ENCODE measurements at regions of chr14 and their contacts with region 1.

Region 1: GRCh38 chr14:96215452-96216244 is 11.0 kb downstream of the BDKRB2 start:
- DNase-seq: peak; percentile 68
- H3K4me3 Mint-ChIP-seq: no peak overlapping the region
- H3K27ac Mint-ChIP-seq: peak overlapping the region; percentile 19
- H3K4me1 Mint-ChIP-seq: peaks cover 19% of the 10 kb centered on the region
- H3K27me3 Mint-ChIP-seq: no peaks in the 10 kb centered on the region
- CTCF ChIP-seq: no peak

Region 2: GRCh38 chr14:96225745-96226151 is 10.1 kb after region 1 on chr14:
- CTCF ChIA-PET with region 1: interaction called, 3 read pairs
- POLR2A ChIA-PET with region 1: interaction called, 23 read pairs
- intact Hi-C with region 1: no loop called
- DNase-seq: peak; percentile 42
- H3K4me3 Mint-ChIP-seq: no peak overlapping the region
- H3K27ac Mint-ChIP-seq: no peak overlapping the region
- H3K4me1 Mint-ChIP-seq: peaks cover 26% of the 10 kb centered on the region
- H3K27me3 Mint-ChIP-seq: no peaks in the 10 kb centered on the region
- CTCF ChIP-seq: no peak

Region 3: GRCh38 chr14:96239759-96240158 is 24.1 kb after region 1 on chr14:
- CTCF ChIA-PET with region 1: no interaction called
- POLR2A ChIA-PET with region 1: no interaction called
- intact Hi-C with region 1: no loop called
- DNase-seq: no peak
- H3K4me3 Mint-ChIP-seq: no peak overlapping the region
- H3K27ac Mint-ChIP-seq: no peak overlapping the region
- H3K4me1 Mint-ChIP-seq: no peaks in the 10 kb centered on the region
- H3K27me3 Mint-ChIP-seq: no peaks in the 10 kb centered on the region
- CTCF ChIP-seq: no peak

Region 4: DNA sequence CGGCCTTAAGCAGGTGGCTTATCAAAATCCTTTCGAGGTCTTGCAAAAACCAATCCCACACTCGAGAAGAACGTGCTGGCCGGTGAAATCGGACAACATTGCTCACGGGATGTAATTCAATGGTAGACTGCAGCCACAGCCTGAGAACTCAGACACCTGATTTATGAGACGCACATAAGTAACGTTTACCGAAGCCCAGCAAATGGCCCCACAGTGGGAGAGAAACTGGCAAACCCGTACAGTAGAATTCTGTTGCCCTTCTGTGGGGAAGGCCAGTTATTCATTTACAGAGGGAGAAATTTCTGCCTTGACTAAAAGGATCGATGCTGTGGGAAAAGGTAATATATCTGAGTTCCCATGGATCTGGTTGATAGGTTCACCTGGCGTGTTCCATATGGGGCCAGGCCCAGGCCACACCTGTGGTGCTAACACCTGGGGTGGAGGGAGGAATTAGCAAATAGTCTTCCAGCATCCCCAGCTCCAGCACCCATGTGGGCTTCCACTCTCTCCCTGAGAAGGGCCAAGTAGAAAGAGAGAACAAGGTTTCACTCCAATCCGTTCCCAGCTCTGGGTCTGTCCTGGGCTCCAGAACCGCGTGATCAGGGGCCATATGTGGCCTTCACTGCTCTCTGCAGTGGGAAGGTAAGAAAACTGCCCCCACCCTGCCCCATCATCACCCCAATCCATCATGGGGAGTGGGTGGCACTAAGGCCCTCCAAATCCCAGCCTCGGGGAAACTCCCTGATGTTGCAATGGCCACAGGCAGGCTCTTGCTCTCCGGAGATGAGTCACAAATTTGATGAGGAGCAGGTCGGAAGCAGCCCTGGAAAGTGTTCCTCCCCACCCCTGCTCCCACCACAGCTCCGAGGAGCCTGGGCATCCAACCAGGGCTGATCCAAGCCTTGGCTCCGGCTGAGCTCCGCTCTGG is 53.0 kb after region 1 on chr14:
- CTCF ChIA-PET with region 1: interaction called, 4 read pairs
- POLR2A ChIA-PET with region 1: interaction called, 10 read pairs
- intact Hi-C with region 1: no loop called
- DNase-seq: peak; percentile 98
- H3K4me3 Mint-ChIP-seq: peak overlapping the region; percentile 43
- H3K27ac Mint-ChIP-seq: peak overlapping the region; percentile 78
- H3K4me1 Mint-ChIP-seq: peaks cover 45% of the 10 kb centered on the region
- H3K27me3 Mint-ChIP-seq: no peaks in the 10 kb centered on the region
- CTCF ChIP-seq: no peak

Measured in MCF 10A (cell line).